ENCODE measurements at regions of chr6 and their contacts with region 1.

Region 1: DNA sequence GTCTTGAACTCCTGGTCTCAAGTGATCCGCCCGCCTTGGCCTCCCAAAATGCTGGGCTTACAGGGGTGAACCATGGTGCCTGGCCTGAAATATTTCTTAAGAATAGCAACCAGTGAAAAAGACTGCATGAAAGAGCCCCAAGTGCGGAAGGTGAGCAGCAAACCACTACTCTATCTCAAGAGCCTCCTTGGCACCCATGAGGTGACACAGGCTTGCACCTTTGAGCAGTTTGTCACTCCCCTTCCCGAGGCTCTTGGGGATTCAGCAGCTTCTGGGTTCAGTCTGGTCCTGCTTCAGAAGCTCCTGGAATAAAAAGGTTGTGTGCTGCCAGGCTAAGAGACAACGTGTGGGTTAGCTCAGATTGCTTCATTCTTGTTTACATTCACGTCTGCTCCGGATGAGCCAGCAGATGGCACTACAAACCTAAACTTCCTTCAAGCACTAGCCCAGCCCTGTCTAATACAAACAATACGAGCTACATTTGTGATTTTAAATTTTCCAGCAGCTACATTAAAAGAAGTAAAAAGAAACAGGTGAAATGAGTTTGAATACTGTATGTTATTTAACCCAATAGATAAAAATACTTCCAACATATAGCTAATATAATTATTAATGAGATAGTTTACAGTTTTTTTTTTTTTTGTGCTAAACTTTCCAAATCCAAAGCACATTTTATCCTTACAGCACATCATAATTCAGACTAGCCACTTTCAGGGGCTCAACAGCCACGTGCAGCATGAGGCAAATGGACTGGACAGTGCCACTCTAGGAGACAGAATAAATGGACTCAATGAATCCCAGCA is 46.2 kb downstream of the GJA10 start:
- DNase-seq: peak; percentile 43 to 78 (median 59)
- H3K4me3 ChIP-seq: no peak overlapping the region
- H3K4me3 Mint-ChIP-seq: no peak overlapping the region
- H3K27ac ChIP-seq: no peak overlapping the region
- H3K27ac Mint-ChIP-seq: peak overlapping the region in 2 of 8 donors; percentile 7 to 35
- H3K4me1 ChIP-seq: peaks cover 13% of the 10 kb centered on the region
- H3K4me1 Mint-ChIP-seq: peaks cover 9 to 21% (median 16%) of the 10 kb centered on the region in 3 donors
- H3K27me3 ChIP-seq: no peaks in the 10 kb centered on the region
- H3K27me3 Mint-ChIP-seq: no peaks in the 10 kb centered on the region

Region 2: GRCh38 chr6:89352278-89353117 is 587.9 kb before region 1 on chr6 and contains the start of gene UBE2J1:
- CTCF ChIA-PET with region 1: no interaction called
- POLR2A ChIA-PET with region 1: interaction called, 10 read pairs
- DNase-seq: peak; percentile 59 to 81 (median 72)
- H3K4me3 ChIP-seq: peak within 1 kb of the TSS; percentile 69
- H3K4me3 Mint-ChIP-seq: peak within 1 kb of the TSS; percentile 92 to 99 (median 95)
- H3K27ac ChIP-seq: peak within 1 kb of the TSS; percentile 85
- H3K27ac Mint-ChIP-seq: peak within 1 kb of the TSS; percentile 93 to 98 (median 96)
- H3K4me1 ChIP-seq: peaks cover 57% of the 10 kb centered on the region
- H3K4me1 Mint-ChIP-seq: peaks cover 61 to 74% (median 69%) of the 10 kb centered on the region in 3 donors
- H3K27me3 ChIP-seq: no peaks in the 10 kb centered on the region
- H3K27me3 Mint-ChIP-seq: no peaks in the 10 kb centered on the region
- total RNA-seq, gene UBE2J1: 27.1 to 27.2 TPM

Region 3: DNA sequence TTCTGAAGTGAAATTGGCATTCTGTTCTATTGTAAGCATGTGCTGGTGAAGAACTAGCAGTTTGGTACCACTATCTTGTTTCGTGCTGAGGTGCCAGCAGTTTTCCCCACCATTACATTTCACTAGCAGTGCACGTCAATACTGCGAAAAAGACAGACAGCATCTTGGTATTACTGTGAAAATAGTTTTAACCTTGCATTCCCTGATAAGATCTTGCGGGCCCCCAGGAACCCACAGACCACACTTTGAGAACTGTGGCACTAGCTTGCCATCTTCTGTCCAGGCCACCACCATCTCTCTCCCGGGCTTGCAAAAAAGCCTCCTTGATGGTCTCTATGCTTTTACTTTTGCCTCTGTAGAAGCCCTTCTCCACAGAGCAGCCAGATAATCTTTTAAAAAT is 170.5 kb after region 1 on chr6:
- CTCF ChIA-PET with region 1: interaction called, 10 read pairs
- POLR2A ChIA-PET with region 1: no interaction called
- DNase-seq: peak; percentile 45 to 82 (median 76)
- H3K4me3 ChIP-seq: no peak overlapping the region
- H3K4me3 Mint-ChIP-seq: peak overlapping the region in 6 of 7 donors; percentile 7 to 52 (median 24)
- H3K27ac ChIP-seq: no peak overlapping the region
- H3K27ac Mint-ChIP-seq: peak overlapping the region; percentile 51 to 86 (median 77)
- H3K4me1 ChIP-seq: peaks cover 54% of the 10 kb centered on the region
- H3K4me1 Mint-ChIP-seq: peaks cover 38 to 58% (median 53%) of the 10 kb centered on the region in 3 donors
- H3K27me3 ChIP-seq: no peaks in the 10 kb centered on the region
- H3K27me3 Mint-ChIP-seq: peaks cover 0 to 2% of the 10 kb centered on the region in 2 donors

Region 4: GRCh38 chr6:90144396-90144795 is 204.0 kb after region 1 on chr6:
- CTCF ChIA-PET with region 1: no interaction called
- POLR2A ChIA-PET with region 1: no interaction called
- DNase-seq: no peak
- H3K4me3 ChIP-seq: no peak overlapping the region
- H3K4me3 Mint-ChIP-seq: no peak overlapping the region
- H3K27ac ChIP-seq: no peak overlapping the region
- H3K27ac Mint-ChIP-seq: peak overlapping the region in 1 of 8 donors; percentile 42
- H3K4me1 ChIP-seq: peaks cover 29% of the 10 kb centered on the region
- H3K4me1 Mint-ChIP-seq: peaks cover 5 to 13% (median 11%) of the 10 kb centered on the region in 3 donors
- H3K27me3 ChIP-seq: no peaks in the 10 kb centered on the region
- H3K27me3 Mint-ChIP-seq: peaks cover 3 to 6% of the 10 kb centered on the region in 2 donors

Region 5: GRCh38 chr6:90296346-90297114 is 356.1 kb after region 1 on chr6 and contains the start of gene BACH2:
- CTCF ChIA-PET with region 1: interaction called, 17 read pairs
- POLR2A ChIA-PET with region 1: interaction called, 5 read pairs
- DNase-seq: peak; percentile 79 to 94 (median 88)
- H3K4me3 ChIP-seq: peak within 1 kb of the TSS; percentile 75
- H3K4me3 Mint-ChIP-seq: peak within 1 kb of the TSS; percentile 87 to 95 (median 91)
- H3K27ac ChIP-seq: peak within 1 kb of the TSS; percentile 68
- H3K27ac Mint-ChIP-seq: peak within 1 kb of the TSS; percentile 61 to 98 (median 92)
- H3K4me1 ChIP-seq: peaks cover 19% of the 10 kb centered on the region
- H3K4me1 Mint-ChIP-seq: peaks cover 20 to 42% (median 28%) of the 10 kb centered on the region in 3 donors
- H3K27me3 ChIP-seq: no peaks in the 10 kb centered on the region
- H3K27me3 Mint-ChIP-seq: peaks cover 5 to 9% of the 10 kb centered on the region in 2 donors
- total RNA-seq, gene BACH2: 39.9 to 41.8 TPM

Region 6: GRCh38 chr6:90403489-90404381 is 463.3 kb after region 1 on chr6:
- CTCF ChIA-PET with region 1: interaction called, 20 read pairs
- POLR2A ChIA-PET with region 1: no interaction called
- DNase-seq: no peak
- H3K4me3 ChIP-seq: no peak overlapping the region
- H3K4me3 Mint-ChIP-seq: peak overlapping the region in 4 of 7 donors; percentile 21 to 78 (median 57)
- H3K27ac ChIP-seq: no peak overlapping the region
- H3K27ac Mint-ChIP-seq: peak overlapping the region; percentile 84 to 96 (median 94)
- H3K4me1 ChIP-seq: peaks cover 31% of the 10 kb centered on the region
- H3K4me1 Mint-ChIP-seq: peaks cover 63 to 79% (median 75%) of the 10 kb centered on the region in 3 donors
- H3K27me3 ChIP-seq: no peaks in the 10 kb centered on the region
- H3K27me3 Mint-ChIP-seq: no peaks in the 10 kb centered on the region

Region 7: DNA sequence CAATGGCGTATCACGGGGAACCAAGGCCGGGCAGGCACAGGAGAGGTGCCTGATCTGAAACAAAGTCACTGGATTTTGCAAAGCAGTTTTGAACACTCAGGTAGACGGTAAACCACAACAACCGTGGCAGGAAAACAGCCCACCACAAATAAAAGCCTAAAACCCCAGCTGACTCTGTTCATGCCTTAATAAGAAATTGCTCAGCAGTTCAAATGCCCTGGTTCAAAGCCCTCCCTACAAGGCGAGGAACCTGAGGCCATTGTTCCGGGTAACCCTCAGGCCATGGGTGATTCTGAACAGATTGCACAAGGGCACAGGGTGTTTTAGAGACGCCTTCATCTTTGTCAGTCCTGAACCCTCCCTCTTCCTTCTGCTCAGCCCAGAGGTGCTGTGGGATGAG is 532.3 kb after region 1 on chr6:
- CTCF ChIA-PET with region 1: interaction called, 113 read pairs
- POLR2A ChIA-PET with region 1: no interaction called
- DNase-seq: peak in 1 of 5 donors; percentile 52
- H3K4me3 ChIP-seq: peak overlapping the region; percentile 30
- H3K4me3 Mint-ChIP-seq: peak overlapping the region in 6 of 7 donors; percentile 62 to 83 (median 74)
- H3K27ac ChIP-seq: no peak overlapping the region
- H3K27ac Mint-ChIP-seq: peak overlapping the region in 4 of 8 donors; percentile 20 to 64 (median 54)
- H3K4me1 ChIP-seq: peaks cover 32% of the 10 kb centered on the region
- H3K4me1 Mint-ChIP-seq: peaks cover 36 to 53% (median 51%) of the 10 kb centered on the region in 3 donors
- H3K27me3 ChIP-seq: no peaks in the 10 kb centered on the region
- H3K27me3 Mint-ChIP-seq: peaks cover 0 to 5% of the 10 kb centered on the region in 2 donors